ENCODE measurements at regions of chr2 and their contacts with region 1.

Region 1: GRCh38 chr2:112941753-112942658 is 31.0 kb downstream of the IL37 start:
- DNase-seq: no peak
- H3K4me3 ChIP-seq: no peak overlapping the region
- H3K27me3 ChIP-seq: peaks cover 1% of the 10 kb centered on the region; the same call in 1 of the 2 replicates
- CTCF ChIP-seq: peak; percentile 98

Region 2: DNA sequence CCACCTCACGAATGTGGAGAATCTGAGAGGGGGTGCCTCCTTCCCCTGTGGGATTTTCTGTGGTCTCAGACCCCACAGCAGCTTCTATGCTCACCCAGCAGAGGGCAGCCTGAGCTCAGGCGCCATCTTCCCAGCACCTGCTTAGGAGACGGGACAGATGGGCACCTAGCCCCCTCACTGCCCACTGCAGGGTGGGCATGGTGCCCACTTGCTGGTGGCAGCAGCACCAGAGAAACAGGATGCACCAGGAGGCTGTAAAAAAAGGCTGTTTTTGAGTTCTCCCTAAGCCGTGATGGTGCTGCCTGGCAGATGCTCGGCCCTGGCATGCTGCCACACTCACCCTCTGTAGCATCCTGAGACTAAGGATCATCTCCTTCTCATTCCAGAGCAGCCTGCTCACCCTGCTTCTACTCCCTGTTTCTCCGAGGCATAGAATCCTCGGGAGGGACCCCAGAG is 315.4 kb before region 1 on chr2:
- CTCF ChIA-PET with region 1: interaction called, 10 read pairs
- POLR2A ChIA-PET with region 1: no interaction called
- DNase-seq: peak; percentile 19
- H3K4me3 ChIP-seq: no peak overlapping the region
- H3K27me3 ChIP-seq: no peaks in the 10 kb centered on the region
- CTCF ChIP-seq: peak; percentile 96

Region 3: GRCh38 chr2:112733456-112733855 is 208.6 kb before region 1 on chr2:
- CTCF ChIA-PET with region 1: interaction called, 66 read pairs
- POLR2A ChIA-PET with region 1: no interaction called
- DNase-seq: no peak
- H3K4me3 ChIP-seq: no peak overlapping the region
- H3K27me3 ChIP-seq: no peaks in the 10 kb centered on the region
- CTCF ChIP-seq: no peak

Region 4: GRCh38 chr2:112768432-112768831 is 173.6 kb before region 1 on chr2:
- CTCF ChIA-PET with region 1: interaction called, 10 read pairs
- POLR2A ChIA-PET with region 1: no interaction called
- DNase-seq: peak; percentile 65
- H3K4me3 ChIP-seq: no peak overlapping the region
- H3K27me3 ChIP-seq: no peaks in the 10 kb centered on the region
- CTCF ChIP-seq: peak; percentile 54

Region 5: GRCh38 chr2:112884869-112885505 is 57.0 kb before region 1 on chr2:
- CTCF ChIA-PET with region 1: interaction called, 21 read pairs
- POLR2A ChIA-PET with region 1: no interaction called
- DNase-seq: no peak
- H3K4me3 ChIP-seq: no peak overlapping the region
- H3K27me3 ChIP-seq: no peaks in the 10 kb centered on the region
- CTCF ChIP-seq: peak; percentile 69

Region 6: GRCh38 chr2:112918256-112918655 is 23.8 kb before region 1 on chr2:
- CTCF ChIA-PET with region 1: interaction called, 36 read pairs
- POLR2A ChIA-PET with region 1: no interaction called
- DNase-seq: no peak
- H3K4me3 ChIP-seq: no peak overlapping the region
- H3K27me3 ChIP-seq: peaks cover 3% of the 10 kb centered on the region
- CTCF ChIP-seq: no peak

Region 7: DNA sequence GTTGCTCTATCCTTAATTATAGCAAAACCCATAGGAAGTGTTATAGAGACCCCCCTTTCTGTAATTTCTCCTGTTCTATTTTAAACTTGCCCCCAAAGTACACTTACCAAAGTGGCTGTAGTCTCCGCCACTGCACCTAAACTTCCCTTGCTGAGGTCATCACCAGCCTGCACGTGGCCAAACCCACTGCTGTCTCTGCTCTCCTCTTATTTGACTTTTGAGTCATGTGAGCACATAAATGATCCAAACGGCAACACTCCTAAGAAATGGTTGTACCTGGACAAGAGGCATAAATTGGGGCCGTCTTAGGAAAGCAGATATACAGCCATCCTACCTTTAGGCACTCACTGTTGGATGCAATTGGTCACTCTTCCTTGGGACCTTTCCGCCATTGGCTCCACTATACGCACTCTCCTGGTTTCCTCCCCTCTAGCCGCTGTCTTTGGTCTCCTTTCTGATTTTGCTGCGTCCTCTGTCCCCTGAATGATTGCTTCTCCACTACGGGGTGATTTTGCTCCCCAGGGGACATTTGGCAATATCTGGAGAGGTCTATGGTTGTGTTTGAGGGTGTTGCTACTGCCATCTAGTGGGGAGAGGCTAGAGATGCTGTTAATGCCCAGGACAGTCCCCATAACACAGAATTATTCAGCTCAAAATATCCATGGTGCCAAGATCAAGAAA is 16.6 kb after region 1 on chr2:
- CTCF ChIA-PET with region 1: interaction called, 35 read pairs
- POLR2A ChIA-PET with region 1: no interaction called
- DNase-seq: no peak
- H3K4me3 ChIP-seq: no peak overlapping the region
- H3K27me3 ChIP-seq: peaks cover 7% of the 10 kb centered on the region
- CTCF ChIP-seq: peak; percentile 86

Region 8: DNA sequence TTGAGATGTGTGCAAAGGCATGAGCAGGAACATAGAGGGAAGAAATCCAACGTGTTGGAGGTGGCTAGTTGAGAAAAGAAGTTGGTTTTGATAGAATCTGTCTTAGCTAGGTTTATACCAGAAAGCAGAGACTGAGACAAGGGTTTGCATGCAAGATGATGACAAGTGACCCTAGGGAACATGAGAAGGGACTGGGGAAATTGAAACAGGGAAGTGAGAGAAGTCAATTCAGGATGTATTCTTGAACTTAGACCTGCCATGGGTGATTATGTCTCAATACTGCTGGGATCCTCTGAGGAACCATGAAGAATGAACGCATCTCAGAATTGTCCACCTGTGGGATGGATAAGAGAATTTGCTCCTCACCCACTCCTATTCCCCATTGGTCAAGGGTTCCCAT is 83.7 kb after region 1 on chr2:
- CTCF ChIA-PET with region 1: no interaction called
- POLR2A ChIA-PET with region 1: no interaction called
- DNase-seq: no peak
- H3K4me3 ChIP-seq: no peak overlapping the region
- H3K27me3 ChIP-seq: peaks cover 19% of the 10 kb centered on the region
- CTCF ChIP-seq: no peak

Region 9: DNA sequence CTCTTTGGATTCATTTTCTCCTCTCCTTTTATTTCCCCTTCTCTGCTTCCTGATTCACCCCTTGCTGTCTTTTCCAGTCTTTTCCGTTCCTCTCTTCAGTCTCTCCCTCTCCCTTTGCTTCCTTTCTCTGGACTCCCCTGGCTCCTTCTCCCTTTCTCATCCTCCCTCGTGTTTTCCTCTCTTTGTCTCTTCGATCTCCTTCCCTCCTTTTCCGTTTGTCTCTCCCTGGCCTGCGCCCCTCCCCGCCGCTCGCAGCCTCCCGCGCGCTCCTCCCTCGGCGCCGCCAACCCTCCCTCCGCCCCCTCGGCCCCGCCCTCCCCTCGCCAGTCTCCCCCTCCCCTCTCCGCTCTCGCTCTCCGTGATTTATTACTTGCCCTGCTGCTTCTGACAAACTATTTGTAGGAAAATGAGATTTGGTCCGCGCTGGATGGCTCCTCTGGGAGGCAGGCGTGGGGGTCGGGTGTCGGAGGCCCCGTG is 382.7 kb after region 1 on chr2:
- CTCF ChIA-PET with region 1: no interaction called
- POLR2A ChIA-PET with region 1: no interaction called
- DNase-seq: no peak
- H3K4me3 ChIP-seq: peak overlapping the region; percentile 33
- H3K27me3 ChIP-seq: no peaks in the 10 kb centered on the region
- CTCF ChIP-seq: no peak

Measured in BJ (cell line).